ENCODE measurements at regions of chr3 and their contacts with region 1.

Region 1: GRCh38 chr3:113287803-113288648 is 76.7 kb downstream of the BOC start:
- DNase-seq: no peak
- H3K4me3 ChIP-seq: no peak overlapping the region
- H3K27ac ChIP-seq: peak overlapping the region; percentile 75 to 80
- H3K4me1 ChIP-seq: peaks cover 0 to 15% of the 10 kb centered on the region in 2 donors
- H3K27me3 ChIP-seq: no peaks in the 10 kb centered on the region
- CTCF ChIP-seq: peak; percentile 98 to 100 (median 99)
- POLR2A ChIP-seq: no peak

Region 2: DNA sequence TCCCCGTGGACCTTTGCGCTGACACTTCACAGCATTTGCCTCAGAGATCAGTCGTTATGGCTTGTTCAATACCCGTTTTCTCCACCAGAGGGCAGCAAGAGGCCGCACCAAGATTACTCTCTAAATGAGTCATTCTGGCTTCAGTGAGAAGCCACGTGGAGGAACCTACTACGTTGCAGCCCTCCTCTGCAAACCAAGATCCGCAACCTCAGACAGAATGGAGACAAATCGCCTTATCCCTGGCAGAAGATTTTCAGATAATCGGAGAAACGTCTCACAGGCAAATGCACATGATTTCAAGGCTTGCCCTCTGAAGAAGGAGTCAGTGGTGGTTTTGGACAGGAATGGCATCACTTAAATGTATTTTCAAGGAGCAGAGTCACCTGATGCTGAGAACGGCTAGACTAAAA is 236.7 kb before region 1 on chr3:
- intact Hi-C with region 1: loop called (anchors 10 kb)
- DNase-seq: peak; percentile 75 to 86
- H3K4me3 ChIP-seq: peak overlapping the region in 2 of 3 donors; percentile 8 to 30
- H3K27ac ChIP-seq: peak overlapping the region; percentile 46 to 56
- H3K4me1 ChIP-seq: peaks cover 0 to 3% of the 10 kb centered on the region in 2 donors
- H3K27me3 ChIP-seq: no peaks in the 10 kb centered on the region
- CTCF ChIP-seq: peak; percentile 97 to 98 (median 97)
- POLR2A ChIP-seq: no peak

Region 3: GRCh38 chr3:113249111-113249510 is 38.9 kb before region 1 on chr3:
- intact Hi-C with region 1: no loop called
- DNase-seq: peak in 1 of 2 donors; percentile 54
- H3K4me3 ChIP-seq: no peak overlapping the region
- H3K27ac ChIP-seq: peak overlapping the region; percentile 92 to 97
- H3K4me1 ChIP-seq: peaks cover 0 to 19% of the 10 kb centered on the region in 2 donors
- H3K27me3 ChIP-seq: no peaks in the 10 kb centered on the region
- CTCF ChIP-seq: no peak
- POLR2A ChIP-seq: no peak

Region 4: DNA sequence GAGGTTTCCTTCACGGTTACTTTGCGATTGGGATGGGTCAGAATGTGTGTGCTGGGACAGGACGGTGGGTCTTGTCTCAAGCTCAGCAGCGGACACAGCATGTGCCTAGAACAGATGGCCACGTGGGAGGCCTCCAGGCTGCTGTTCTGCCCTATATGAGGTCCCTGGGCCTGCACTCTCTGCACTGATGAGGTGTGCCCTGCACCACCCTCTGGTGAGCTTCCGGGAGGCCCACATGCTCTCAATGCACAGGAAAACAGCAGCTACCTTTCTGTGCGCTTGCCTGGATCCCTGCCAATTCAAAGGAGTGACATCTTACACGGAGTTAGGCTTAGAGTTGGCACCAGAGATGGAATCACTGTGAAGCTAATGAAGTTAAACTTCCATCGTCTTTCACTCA is 16.8 kb before region 1 on chr3:
- intact Hi-C with region 1: no loop called
- DNase-seq: no peak
- H3K4me3 ChIP-seq: no peak overlapping the region
- H3K27ac ChIP-seq: peak overlapping the region; percentile 25 to 70
- H3K4me1 ChIP-seq: peaks cover 0 to 11% of the 10 kb centered on the region in 2 donors
- H3K27me3 ChIP-seq: no peaks in the 10 kb centered on the region
- CTCF ChIP-seq: no peak
- POLR2A ChIP-seq: no peak

Region 5: DNA sequence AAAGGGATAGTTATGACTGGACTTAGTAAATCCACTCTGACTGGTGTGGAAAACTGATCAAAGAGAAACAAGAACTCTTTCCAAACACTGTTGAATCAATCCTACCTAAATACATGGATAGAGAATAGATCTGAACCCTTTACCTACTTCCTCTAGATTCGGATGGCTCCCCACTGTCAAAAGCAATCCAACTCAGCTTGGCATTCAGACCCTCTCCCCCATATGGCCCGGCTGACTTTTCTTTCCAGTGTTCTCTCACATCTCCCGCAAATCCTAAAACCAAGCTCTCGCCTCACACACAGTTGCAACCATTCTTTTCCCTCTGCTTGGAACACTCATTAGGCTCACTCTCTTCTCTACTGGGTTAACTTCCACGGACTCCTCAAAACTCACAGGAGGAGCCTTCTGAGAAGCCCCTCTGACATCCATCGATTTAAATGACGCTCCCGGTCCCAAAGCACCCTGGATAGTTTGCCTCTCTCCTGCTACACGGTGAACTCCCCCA is 226.3 kb after region 1 on chr3:
- intact Hi-C with region 1: no loop called
- DNase-seq: no peak
- H3K4me3 ChIP-seq: peak overlapping the region; percentile 70 to 95 (median 72)
- H3K27ac ChIP-seq: peak overlapping the region; percentile 89 to 95
- H3K4me1 ChIP-seq: no peaks in the 10 kb centered on the region
- H3K27me3 ChIP-seq: no peaks in the 10 kb centered on the region
- CTCF ChIP-seq: no peak
- POLR2A ChIP-seq: no peak